Activated CD4-positive, alpha-beta T cell treated with anti-CD3 and anti-CD28 coated beads, Interleukin-2, amount 10 ng/mL, durations not matched to agents 7 days and 5 days (primary cell): ENCODE measurements at regions of chr20 and their contacts with region 1.

Region 1: GRCh38 chr20:48620519-48621254 is 207.1 kb downstream of the PREX1 start:
- DNase-seq: peak; percentile 78
- H3K4me3 Mint-ChIP-seq: peak overlapping the region; percentile 37
- H3K27ac Mint-ChIP-seq: peak overlapping the region; percentile 61
- H3K4me1 Mint-ChIP-seq: peaks cover 12% of the 10 kb centered on the region
- H3K27me3 Mint-ChIP-seq: no peaks in the 10 kb centered on the region

Region 2: GRCh38 chr20:47677635-47678453 is 942.8 kb before region 1 on chr20:
- CTCF ChIA-PET with region 1: interaction called, 20 read pairs
- POLR2A ChIA-PET with region 1: no interaction called
- DNase-seq: peak; percentile 59
- H3K4me3 Mint-ChIP-seq: no peak overlapping the region
- H3K27ac Mint-ChIP-seq: peak overlapping the region; percentile 60
- H3K4me1 Mint-ChIP-seq: no peaks in the 10 kb centered on the region
- H3K27me3 Mint-ChIP-seq: no peaks in the 10 kb centered on the region

Region 3: DNA sequence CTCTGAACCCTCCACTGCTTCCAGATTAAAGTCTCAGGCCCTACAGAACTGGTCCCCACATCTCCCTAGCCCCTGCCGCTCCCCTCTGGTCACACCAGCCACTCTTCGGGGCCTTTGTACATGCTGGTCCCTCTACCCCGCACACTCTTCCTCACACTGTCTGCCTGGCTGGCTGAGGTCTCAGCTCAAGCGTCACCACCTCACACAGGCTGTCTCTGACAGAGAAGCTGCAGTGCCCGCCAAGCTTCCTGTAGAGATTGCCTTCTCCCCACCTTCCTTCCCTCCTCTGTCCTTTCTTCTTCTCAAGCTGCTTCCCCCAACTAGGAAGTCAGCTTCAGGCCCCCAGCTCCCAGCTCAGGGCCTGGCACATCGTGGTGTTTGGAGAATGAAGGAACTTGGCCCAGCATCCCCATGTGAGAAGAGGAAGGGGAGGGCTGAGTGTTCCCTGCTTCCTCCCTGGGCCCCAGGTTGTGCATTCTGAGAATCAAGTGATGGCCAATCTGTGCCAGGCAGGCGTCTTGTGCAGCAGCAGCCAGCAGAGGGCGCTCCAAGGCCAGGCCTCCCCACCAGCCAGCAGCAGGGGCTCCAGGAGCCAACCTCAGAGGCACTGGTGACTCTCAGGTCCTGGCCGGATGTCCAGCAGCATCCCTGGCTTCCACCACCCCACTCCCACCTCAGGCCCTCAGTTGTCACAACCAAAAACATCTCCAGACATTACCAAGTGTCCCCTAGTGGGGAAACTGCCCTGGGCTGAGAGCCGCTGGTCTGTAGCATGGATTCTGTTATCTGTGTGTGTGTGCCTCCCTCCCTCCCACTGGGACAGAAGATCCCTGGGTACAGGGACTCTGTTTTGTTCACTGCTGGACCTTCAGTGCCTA is 15.0 kb after region 1 on chr20:
- CTCF ChIA-PET with region 1: interaction called, 12 read pairs
- POLR2A ChIA-PET with region 1: interaction called, 4 read pairs
- DNase-seq: peak; percentile 73
- H3K4me3 Mint-ChIP-seq: no peak overlapping the region
- H3K27ac Mint-ChIP-seq: no peak overlapping the region
- H3K4me1 Mint-ChIP-seq: peaks cover 15% of the 10 kb centered on the region
- H3K27me3 Mint-ChIP-seq: no peaks in the 10 kb centered on the region

Region 4: DNA sequence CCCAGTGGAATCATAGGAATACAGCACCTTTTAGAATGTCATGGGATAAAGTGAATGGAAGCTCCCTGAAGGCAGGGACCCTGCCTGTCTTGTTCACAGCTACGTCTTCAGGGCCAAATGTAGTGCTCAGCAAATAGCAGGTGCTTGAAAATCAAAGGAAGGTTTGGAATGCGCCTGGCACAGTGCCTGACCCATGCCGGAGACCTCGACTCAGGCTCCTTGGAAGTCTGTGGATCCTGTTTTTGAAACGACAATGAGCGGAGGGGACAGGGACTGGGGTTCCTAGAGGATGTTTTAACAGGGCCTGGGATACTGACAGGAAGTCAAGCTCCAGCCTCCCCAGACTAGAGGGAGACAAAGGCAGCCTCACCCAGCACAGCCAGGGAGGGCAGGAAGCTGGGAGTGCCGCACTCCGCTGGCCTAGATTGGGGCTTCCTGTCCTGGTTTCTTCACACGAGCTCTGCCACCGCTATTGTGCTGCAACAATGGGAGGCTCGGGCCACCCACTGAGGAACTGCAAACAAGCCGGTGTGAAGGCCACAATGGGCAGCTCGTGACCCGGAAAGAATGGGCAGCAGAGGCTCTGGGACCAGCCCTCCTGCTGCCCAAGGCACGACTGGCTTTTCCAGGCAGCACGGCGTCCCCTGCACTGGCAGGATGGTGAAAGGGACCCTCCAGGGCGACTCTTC is 130.4 kb after region 1 on chr20:
- CTCF ChIA-PET with region 1: no interaction called
- POLR2A ChIA-PET with region 1: no interaction called
- DNase-seq: peak; percentile 56
- H3K4me3 Mint-ChIP-seq: peak overlapping the region; percentile 20
- H3K27ac Mint-ChIP-seq: peak overlapping the region; percentile 86
- H3K4me1 Mint-ChIP-seq: peaks cover 74% of the 10 kb centered on the region
- H3K27me3 Mint-ChIP-seq: no peaks in the 10 kb centered on the region